ENCODE measurements at regions of chr7 and their contacts with region 1.

Region 1: DNA sequence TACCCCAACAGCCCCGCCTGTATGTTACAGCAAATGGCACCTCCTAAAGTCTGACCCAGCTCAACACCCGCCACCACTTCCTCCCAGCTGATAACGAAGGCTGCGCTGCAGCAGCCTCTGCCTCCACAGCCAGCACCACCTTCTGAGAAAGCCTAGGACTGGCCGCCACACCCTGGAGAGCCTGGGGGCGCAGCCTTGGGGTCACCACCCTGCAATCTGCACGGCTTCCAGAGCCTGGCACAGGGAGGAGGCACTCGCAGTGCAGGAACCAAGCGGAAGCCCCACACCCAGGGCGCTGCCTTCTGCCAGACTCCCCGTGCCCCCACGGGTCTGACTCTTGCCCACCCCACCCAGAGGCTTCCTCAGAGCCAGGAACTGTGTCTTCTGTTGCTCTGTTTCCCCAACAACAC is 112.5 kb downstream of the MAD1L1 start:
- DNase-seq: no peak
- ATAC-seq: no peak

Region 2: GRCh38 chr7:2281541-2281940 is 161.3 kb after region 1 on chr7:
- intact Hi-C with region 1: loop called (anchors 5 kb)
- DNase-seq: no peak
- ATAC-seq: peak; percentile 63